ENCODE measurements at regions of chr10 and their contacts with region 1.

Region 1: DNA sequence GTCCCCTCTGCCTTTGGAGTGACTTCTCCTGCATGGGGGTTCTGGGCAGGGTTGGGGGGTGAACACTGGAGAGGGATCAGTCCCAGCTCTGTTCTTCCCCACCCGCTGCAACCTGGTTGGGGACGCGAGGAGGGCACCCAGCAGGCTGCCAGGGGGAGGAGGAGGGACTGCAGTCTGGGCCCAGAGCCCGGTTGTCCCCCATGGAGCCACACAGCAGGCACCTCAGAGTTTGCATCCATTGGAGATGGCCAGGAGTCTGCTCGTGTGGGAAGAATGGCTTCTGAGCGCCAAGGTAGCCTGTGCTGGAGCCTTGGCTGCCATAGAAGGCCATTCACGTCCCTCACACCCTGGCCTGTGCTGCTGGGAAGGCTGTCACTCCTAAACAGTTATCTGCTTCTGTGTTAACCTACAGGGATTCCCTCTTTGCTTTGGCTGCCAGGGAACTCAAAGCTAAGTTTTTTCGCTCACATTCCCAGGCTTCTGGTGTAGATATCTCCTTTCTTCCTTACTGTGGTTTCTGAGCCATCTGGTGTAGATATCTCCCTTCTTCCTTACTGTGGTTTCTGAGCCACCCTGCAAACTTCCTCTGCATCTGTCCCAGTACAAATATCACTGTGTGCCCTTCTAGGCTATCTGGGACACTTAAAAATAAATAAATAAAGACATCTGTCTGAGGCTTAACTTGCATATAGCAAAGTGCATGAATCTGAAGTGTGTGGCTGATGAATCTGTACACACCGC is 133.7 kb downstream of the LHPP start:
- DNase-seq: no peak
- ATAC-seq: no peak
- H3K4me3 Mint-ChIP-seq: no peak overlapping the region
- H3K27ac Mint-ChIP-seq: no peak overlapping the region
- H3K4me1 Mint-ChIP-seq: peaks cover 74% of the 10 kb centered on the region
- H3K27me3 Mint-ChIP-seq: no peaks in the 10 kb centered on the region
- CTCF ChIP-seq: no peak

Region 2: DNA sequence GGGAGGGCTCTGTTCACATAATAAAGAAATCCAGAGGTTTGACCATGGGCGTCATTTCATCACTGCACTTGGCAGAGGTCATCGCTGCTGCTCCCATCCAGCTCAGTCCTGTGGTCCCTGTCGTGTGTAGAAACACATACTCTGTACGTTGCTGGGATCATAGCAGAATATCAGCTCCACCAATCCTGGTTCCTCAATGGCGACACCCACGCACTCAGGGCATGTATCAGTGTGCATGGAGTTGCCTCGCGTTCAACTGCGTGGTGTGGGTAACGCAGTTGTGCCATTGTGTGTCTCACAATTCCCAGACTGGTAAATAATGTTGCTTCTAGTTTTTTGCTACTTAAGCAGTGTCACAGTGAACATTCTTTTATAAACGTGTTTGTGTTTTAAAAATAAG is 22.6 kb before region 1 on chr10:
- CTCF ChIA-PET with region 1: no interaction called
- POLR2A ChIA-PET with region 1: interaction called, 15 read pairs
- intact Hi-C with region 1: no loop called
- DNase-seq: no peak
- ATAC-seq: no peak
- H3K4me3 Mint-ChIP-seq: no peak overlapping the region
- H3K27ac Mint-ChIP-seq: no peak overlapping the region
- H3K4me1 Mint-ChIP-seq: peaks cover 48% of the 10 kb centered on the region
- H3K27me3 Mint-ChIP-seq: no peaks in the 10 kb centered on the region
- CTCF ChIP-seq: no peak

Measured in activated B cell treated with CpG ODN at 0.5 μM for 24 hours (primary cell).